PC-3 (cell line): ENCODE measurements at regions of chr7 and their contacts with region 1.

Region 1: GRCh38 chr7:105776058-105776751 is 100.2 kb downstream of the ATXN7L1 start:
- DNase-seq: peak; percentile 99
- ATAC-seq: peak; percentile 91
- H3K4me3 ChIP-seq: peak overlapping the region; percentile 1; the same call in 1 of the 2 replicates
- H3K27ac ChIP-seq: peak overlapping the region; percentile 80
- H3K4me1 ChIP-seq: peaks cover 32% of the 10 kb centered on the region
- H3K27me3 ChIP-seq: no peaks in the 10 kb centered on the region
- CTCF ChIP-seq: no peak

Region 2: GRCh38 chr7:105723572-105723971 is 52.6 kb before region 1 on chr7:
- CTCF ChIA-PET with region 1: no interaction called
- POLR2A ChIA-PET with region 1: no interaction called
- intact Hi-C with region 1: no loop called
- DNase-seq: no peak
- ATAC-seq: no peak
- H3K4me3 ChIP-seq: no peak overlapping the region
- H3K27ac ChIP-seq: no peak overlapping the region
- H3K4me1 ChIP-seq: peaks cover 10% of the 10 kb centered on the region
- H3K27me3 ChIP-seq: no peaks in the 10 kb centered on the region
- CTCF ChIP-seq: no peak

Region 3: DNA sequence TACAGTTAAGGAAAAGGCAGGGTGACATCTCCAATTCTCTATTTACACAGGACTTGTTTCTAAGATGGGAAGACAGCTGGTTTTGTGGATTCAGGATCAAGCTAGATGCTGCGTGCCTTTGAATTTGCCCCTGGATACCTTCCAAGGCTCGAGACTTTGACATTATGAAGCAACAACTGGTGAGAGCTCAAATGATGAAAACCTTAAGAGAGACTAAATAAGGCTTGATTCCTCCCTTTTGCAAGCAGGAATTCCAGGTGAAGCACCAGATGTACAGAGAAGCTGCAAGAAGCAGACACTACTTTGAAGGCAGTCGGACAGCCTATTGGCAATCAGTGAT is 19.2 kb after region 1 on chr7:
- CTCF ChIA-PET with region 1: interaction called, 3 read pairs
- POLR2A ChIA-PET with region 1: no interaction called
- intact Hi-C with region 1: loop called (anchors 2 kb)
- DNase-seq: peak; percentile 48
- ATAC-seq: 0 out of 2 replicates have a peak, but pooled peaks have one; percentile 2
- H3K4me3 ChIP-seq: peak overlapping the region; percentile 46; the same call in 1 of the 2 replicates
- H3K27ac ChIP-seq: peak overlapping the region; percentile 87
- H3K4me1 ChIP-seq: peaks cover 46% of the 10 kb centered on the region
- H3K27me3 ChIP-seq: no peaks in the 10 kb centered on the region
- CTCF ChIP-seq: no peak

Region 4: GRCh38 chr7:105808703-105809590 is 32.7 kb after region 1 on chr7:
- CTCF ChIA-PET with region 1: no interaction called
- POLR2A ChIA-PET with region 1: no interaction called
- intact Hi-C with region 1: loop called (anchors 1 kb)
- DNase-seq: peak; percentile 85
- ATAC-seq: peak; percentile 89
- H3K4me3 ChIP-seq: no peak overlapping the region
- H3K27ac ChIP-seq: peak overlapping the region; percentile 83
- H3K4me1 ChIP-seq: peaks cover 33% of the 10 kb centered on the region
- H3K27me3 ChIP-seq: no peaks in the 10 kb centered on the region
- CTCF ChIP-seq: 0 out of 2 replicates have a peak, but pooled peaks have one; percentile 10

Region 5: DNA sequence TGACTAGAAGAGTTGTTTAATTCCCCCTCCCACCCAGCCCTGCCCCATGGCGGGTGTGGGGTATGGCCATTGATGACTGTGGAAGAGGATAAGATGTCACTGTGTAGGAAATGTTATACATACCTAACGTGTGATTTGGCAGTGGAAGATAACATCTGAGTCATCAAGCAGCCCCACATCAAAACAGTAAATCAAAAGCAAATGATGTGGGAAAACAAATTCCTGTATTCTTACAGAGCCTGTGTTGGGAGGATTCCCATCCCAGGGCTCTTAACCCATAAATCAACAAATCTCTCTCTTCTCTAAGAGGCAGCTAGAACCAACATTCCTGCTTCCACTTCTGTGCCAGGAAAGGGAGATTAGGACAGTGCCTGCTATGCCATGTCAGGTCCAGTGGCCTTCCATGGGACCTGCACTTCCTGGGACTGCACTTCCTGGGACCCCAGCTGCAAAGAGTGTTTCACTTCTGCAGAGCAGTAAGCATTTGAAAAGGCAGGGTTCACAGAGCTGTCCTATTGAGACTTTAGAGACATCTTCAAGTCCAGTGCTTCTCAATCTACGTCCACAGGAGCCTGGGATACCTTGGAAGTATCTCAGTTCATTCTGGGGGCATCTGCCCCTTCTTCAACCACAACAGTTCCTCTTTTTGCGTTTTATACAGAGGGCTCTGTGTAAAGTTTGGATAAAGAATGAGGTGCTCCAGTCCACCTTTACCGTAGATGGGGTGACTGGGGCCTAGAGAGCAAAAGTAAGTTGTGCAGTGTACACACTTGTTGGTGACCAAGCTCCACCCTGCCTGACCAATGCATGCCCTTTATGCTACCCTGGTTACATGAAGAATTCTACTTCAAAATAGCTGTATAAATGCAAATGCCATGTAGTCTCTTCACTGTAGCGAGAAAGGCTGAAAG is 54.4 kb after region 1 on chr7:
- CTCF ChIA-PET with region 1: no interaction called
- POLR2A ChIA-PET with region 1: no interaction called
- intact Hi-C with region 1: loop called (anchors 1 kb)
- DNase-seq: peak; percentile 99
- ATAC-seq: peak; percentile 82
- H3K4me3 ChIP-seq: no peak overlapping the region
- H3K27ac ChIP-seq: peak overlapping the region; percentile 82
- H3K4me1 ChIP-seq: peaks cover 57% of the 10 kb centered on the region
- H3K27me3 ChIP-seq: no peaks in the 10 kb centered on the region
- CTCF ChIP-seq: no peak